ENCODE measurements at regions of chr7 and their contacts with region 1.

Region 1: DNA sequence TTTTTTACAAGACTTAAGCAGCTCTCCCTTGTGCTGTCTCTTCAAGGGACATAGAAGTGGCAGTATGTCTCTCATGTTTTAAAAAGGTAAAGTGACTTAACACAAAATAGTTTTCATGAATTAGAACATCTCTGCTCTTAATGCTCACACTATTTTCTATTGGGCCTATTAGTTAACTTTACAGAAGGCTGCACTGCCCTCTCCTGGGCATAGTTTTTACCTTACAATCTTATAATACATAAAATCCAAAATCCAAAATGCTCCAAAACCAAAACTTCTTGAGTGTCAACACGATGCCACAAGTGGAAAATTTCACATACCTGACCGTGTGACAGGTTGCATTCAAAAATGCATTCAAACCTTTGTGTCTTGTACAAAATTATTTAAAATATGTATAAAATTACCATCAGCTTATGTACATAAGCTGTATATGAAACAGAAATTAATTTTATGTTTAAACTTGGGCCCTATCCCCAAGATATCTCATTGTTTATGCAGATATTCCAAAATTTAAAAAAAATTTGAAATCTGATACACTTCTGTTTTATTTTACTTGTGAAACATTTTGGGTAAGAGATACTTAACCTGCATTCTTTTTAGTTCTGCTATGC is 25.8 kb downstream of the TES start:
- DNase-seq: peak; percentile 71
- ATAC-seq: peak; percentile 80
- H3K4me3 ChIP-seq: no peak overlapping the region
- H3K4me3 Mint-ChIP-seq: no peak overlapping the region
- H3K27ac ChIP-seq: no peak overlapping the region
- H3K27ac Mint-ChIP-seq: no peak overlapping the region
- H3K4me1 ChIP-seq: peaks cover 0 to 8% of the 10 kb centered on the region in 2 donors
- H3K4me1 Mint-ChIP-seq: peaks cover 32% of the 10 kb centered on the region
- H3K27me3 ChIP-seq: no peaks in the 10 kb centered on the region
- H3K27me3 Mint-ChIP-seq: no peaks in the 10 kb centered on the region
- CTCF ChIP-seq: peak; percentile 85

Region 2: DNA sequence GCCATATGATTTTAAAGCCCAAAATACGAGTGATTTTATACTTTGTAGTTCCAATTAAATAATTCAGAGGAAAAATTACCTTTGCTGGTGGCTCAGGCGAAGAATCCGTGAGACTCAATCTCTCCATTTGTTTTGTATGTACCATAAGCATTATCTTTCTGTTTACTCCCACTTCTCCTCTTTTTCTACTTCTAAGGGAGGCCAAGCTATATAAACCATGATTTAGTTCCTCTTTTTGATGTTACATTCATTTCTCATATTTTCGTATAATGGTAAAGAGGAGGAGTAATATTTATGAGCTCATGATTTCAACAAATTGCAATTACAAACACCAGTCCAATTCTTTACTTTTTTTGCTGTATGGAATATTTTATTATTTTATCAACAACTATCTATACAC is 76.4 kb before region 1 on chr7:
- CTCF ChIA-PET with region 1: interaction called, 21 read pairs
- POLR2A ChIA-PET with region 1: no interaction called
- intact Hi-C with region 1: no loop called
- DNase-seq: peak; percentile 51
- ATAC-seq: peak; percentile 50
- H3K4me3 ChIP-seq: peak overlapping the region in 2 of 5 experiments; percentile 34 to 37
- H3K4me3 Mint-ChIP-seq: peak overlapping the region; percentile 52
- H3K27ac ChIP-seq: no peak overlapping the region
- H3K27ac Mint-ChIP-seq: peak overlapping the region; percentile 46
- H3K4me1 ChIP-seq: peaks cover 24 to 28% of the 10 kb centered on the region in 2 donors
- H3K4me1 Mint-ChIP-seq: peaks cover 54% of the 10 kb centered on the region
- H3K27me3 ChIP-seq: no peaks in the 10 kb centered on the region
- H3K27me3 Mint-ChIP-seq: no peaks in the 10 kb centered on the region
- CTCF ChIP-seq: no peak

Region 3: DNA sequence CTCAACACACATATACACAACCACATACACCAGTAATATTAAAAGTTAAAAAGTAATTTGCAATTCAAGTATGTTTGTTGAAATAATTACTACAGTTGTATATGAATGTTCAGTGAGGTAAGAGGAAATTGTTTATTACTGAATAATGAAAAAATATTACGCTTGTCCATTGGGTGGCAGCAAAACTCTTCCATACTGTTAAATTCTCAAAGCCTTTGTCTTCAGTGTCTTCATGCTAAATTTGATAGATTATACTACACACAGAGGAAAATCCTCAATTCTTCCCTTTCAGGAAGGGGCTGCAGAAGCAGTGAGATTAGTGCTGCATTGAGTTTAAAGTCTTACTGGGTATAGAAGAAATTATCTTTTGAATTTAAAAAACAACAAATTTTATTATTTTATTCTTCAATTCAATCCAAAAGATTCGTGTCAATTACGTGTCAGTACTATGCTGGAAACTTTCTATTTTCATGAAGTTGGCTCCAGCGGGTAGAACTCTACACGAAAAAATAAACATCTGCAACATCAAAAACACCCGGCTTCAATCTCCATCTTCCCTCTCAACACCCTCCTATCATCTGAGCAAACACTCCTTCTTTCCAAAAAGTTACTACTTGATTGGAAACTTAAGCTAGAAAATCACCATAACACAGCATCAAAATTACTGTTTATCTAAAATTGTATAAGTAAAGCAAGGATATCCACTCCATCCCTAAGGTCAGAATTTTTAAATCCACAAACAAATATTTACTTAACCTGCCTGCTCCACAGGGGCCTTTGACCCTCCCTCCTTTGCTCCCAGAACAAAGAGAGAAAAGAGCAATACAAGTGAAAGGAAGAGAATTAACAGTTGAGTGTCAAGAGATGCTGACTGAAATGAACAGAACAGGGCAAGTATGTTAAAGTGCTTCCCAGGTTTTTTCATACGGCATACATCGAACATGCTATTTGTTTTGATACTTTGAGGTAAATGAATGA is 62.8 kb before region 1 on chr7:
- CTCF ChIA-PET with region 1: interaction called, 497 read pairs
- POLR2A ChIA-PET with region 1: no interaction called
- intact Hi-C with region 1: loop called (anchors 1 kb)
- DNase-seq: peak; percentile 74
- ATAC-seq: peak; percentile 61
- H3K4me3 ChIP-seq: no peak overlapping the region
- H3K4me3 Mint-ChIP-seq: no peak overlapping the region
- H3K27ac ChIP-seq: no peak overlapping the region
- H3K27ac Mint-ChIP-seq: no peak overlapping the region
- H3K4me1 ChIP-seq: no peaks in the 10 kb centered on the region
- H3K4me1 Mint-ChIP-seq: peaks cover 2% of the 10 kb centered on the region
- H3K27me3 ChIP-seq: no peaks in the 10 kb centered on the region
- H3K27me3 Mint-ChIP-seq: no peaks in the 10 kb centered on the region
- CTCF ChIP-seq: peak; percentile 82

Region 4: DNA sequence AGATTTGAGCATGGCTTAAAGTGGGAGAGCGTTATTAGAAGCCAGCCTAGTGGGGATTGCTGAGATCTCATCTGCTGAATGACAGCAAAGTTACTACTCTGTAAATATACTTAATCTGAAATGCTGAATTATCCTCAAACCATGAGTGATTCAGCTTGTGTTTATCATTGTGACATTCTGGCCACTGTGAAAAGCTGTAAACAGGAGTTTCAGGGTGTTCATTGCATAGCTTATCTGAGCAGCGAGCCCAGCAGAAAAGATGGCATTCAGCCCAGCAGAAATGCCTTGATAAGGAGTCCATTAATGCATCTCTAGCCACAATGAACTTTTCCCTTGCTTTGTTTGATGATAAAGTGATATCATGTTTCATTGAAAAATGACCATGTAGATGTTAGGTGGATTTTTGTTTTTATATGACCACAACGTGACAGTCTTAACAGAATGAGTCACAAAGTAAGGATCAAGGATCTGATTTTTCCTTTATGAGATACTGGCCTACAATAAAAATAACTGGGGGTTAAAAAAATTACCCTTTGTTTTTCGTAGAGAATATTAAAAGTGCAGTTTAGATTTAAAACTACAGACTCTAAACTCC is 18.0 kb before region 1 on chr7:
- CTCF ChIA-PET with region 1: interaction called, 48 read pairs
- POLR2A ChIA-PET with region 1: no interaction called
- intact Hi-C with region 1: no loop called
- DNase-seq: no peak
- ATAC-seq: no peak
- H3K4me3 ChIP-seq: no peak overlapping the region
- H3K4me3 Mint-ChIP-seq: no peak overlapping the region
- H3K27ac ChIP-seq: no peak overlapping the region
- H3K27ac Mint-ChIP-seq: no peak overlapping the region
- H3K4me1 ChIP-seq: peaks cover 44 to 62% of the 10 kb centered on the region in 2 donors
- H3K4me1 Mint-ChIP-seq: peaks cover 83% of the 10 kb centered on the region
- H3K27me3 ChIP-seq: no peaks in the 10 kb centered on the region
- H3K27me3 Mint-ChIP-seq: no peaks in the 10 kb centered on the region
- CTCF ChIP-seq: no peak

Region 5: DNA sequence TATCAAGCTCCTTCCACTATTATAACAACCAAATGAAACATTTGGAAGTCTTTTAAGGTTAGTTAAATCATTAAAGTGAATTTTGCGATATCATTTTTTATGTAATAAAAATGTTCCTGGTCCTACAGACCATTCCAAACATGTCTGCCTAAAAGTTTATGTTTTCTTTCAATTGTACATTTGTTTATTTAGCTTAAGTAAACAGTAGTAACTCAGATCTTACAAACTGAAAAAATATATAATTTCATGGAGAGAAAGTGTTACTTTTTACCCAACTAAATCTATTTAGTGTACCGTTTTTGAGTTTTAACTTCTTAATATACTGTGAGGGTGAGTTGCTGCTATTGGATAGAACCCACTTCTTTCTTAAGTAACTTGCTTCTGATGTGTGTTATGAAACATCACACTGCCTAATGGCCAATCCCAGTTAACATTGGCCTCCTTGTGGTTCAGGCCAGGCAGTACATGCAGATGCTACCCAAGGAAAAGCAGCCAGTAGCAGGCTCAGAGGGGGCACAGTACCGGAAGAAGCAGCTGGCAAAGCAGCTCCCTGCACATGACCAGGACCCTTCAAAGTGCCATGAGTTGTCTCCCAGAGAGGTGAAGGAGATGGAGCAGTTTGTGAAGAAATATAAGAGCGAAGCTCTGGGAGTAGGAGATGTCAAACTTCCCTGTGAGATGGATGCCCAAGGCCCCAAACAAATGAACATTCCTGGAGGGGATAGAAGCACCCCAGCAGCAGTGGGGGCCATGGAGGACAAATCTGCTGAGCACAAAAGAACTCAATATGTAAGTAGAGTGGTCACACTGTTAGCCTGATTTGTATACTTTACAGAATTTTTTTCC is 13.8 kb after region 1 on chr7:
- CTCF ChIA-PET with region 1: interaction called, 28 read pairs
- POLR2A ChIA-PET with region 1: no interaction called
- intact Hi-C with region 1: no loop called
- DNase-seq: peak; percentile 17
- ATAC-seq: no peak
- H3K4me3 ChIP-seq: no peak overlapping the region
- H3K4me3 Mint-ChIP-seq: no peak overlapping the region
- H3K27ac ChIP-seq: no peak overlapping the region
- H3K27ac Mint-ChIP-seq: peak overlapping the region; percentile 32
- H3K4me1 ChIP-seq: no peaks in the 10 kb centered on the region
- H3K4me1 Mint-ChIP-seq: peaks cover 5% of the 10 kb centered on the region
- H3K27me3 ChIP-seq: no peaks in the 10 kb centered on the region
- H3K27me3 Mint-ChIP-seq: no peaks in the 10 kb centered on the region
- CTCF ChIP-seq: peak; percentile 38

Measured in B cell (primary cell).